ENCODE measurements at regions of chr2 and their contacts with region 1.

Region 1: GRCh38 chr2:12484536-12485115 is 232.1 kb upstream of the TRIB2 start:
- DNase-seq: peak; percentile 53
- H3K4me3 ChIP-seq: no peak overlapping the region
- H3K27ac ChIP-seq: no peak overlapping the region
- H3K4me1 ChIP-seq: peaks cover 18% of the 10 kb centered on the region
- H3K27me3 ChIP-seq: no peaks in the 10 kb centered on the region
- CTCF ChIP-seq: no peak
- POLR2A ChIP-seq: no peak

Region 2: DNA sequence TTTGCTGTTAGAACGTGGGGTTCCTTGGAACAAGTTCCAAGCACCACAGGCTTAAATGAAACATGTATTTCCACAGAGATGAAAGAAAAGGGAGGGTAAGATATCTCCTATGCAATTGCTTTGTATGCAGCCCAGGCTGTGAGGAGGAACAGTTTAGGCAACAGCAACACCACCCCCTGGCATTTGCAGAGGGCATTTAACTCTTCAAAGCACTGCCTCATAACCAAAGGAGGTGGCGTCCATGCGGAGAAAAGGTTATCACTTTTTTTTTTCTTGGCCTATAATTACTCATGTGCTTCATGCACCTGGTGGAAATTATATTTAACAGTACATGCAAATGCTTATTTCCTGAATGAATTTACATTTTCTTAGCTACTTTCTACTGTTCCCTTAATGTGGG is 452.2 kb before region 1 on chr2:
- CTCF ChIA-PET with region 1: no interaction called
- POLR2A ChIA-PET with region 1: no interaction called
- dilution Hi-C with region 1: no loop called
- intact Hi-C with region 1: no loop called
- DNase-seq: no peak
- H3K4me3 ChIP-seq: no peak overlapping the region
- H3K27ac ChIP-seq: no peak overlapping the region
- H3K4me1 ChIP-seq: no peaks in the 10 kb centered on the region
- H3K27me3 ChIP-seq: no peaks in the 10 kb centered on the region
- CTCF ChIP-seq: no peak
- POLR2A ChIP-seq: no peak

Region 3: GRCh38 chr2:12452211-12452610 is 32.4 kb before region 1 on chr2:
- CTCF ChIA-PET with region 1: no interaction called
- POLR2A ChIA-PET with region 1: no interaction called
- dilution Hi-C with region 1: no loop called
- intact Hi-C with region 1: no loop called
- DNase-seq: no peak
- H3K4me3 ChIP-seq: no peak overlapping the region
- H3K27ac ChIP-seq: no peak overlapping the region
- H3K4me1 ChIP-seq: peaks cover 3% of the 10 kb centered on the region
- H3K27me3 ChIP-seq: no peaks in the 10 kb centered on the region
- CTCF ChIP-seq: no peak
- POLR2A ChIP-seq: no peak

Region 4: GRCh38 chr2:12507295-12507694 is 22.7 kb after region 1 on chr2:
- CTCF ChIA-PET with region 1: no interaction called
- POLR2A ChIA-PET with region 1: no interaction called
- dilution Hi-C with region 1: no loop called
- intact Hi-C with region 1: no loop called
- DNase-seq: no peak
- H3K4me3 ChIP-seq: no peak overlapping the region
- H3K27ac ChIP-seq: no peak overlapping the region
- H3K4me1 ChIP-seq: no peaks in the 10 kb centered on the region
- H3K27me3 ChIP-seq: no peaks in the 10 kb centered on the region
- CTCF ChIP-seq: no peak
- POLR2A ChIP-seq: no peak

Region 5: DNA sequence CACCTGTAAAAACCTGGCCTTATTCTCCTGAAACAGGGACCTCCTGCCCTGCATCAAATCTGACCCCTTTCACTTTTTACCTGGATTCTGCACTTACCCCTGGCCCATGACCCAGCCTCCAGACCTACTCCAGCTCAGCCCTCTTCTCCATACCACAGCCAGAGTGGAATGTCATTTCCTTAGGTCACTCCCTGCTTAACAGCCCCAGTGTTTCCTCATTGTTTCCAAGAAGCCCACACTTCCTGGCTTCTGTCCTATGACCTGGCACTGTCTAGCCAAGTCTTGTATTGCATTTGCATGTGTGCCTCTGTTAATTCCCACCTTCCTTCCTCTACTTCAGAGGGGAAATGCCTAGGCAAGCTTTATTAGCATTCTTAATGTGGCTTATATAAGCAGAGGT is 180.7 kb after region 1 on chr2:
- CTCF ChIA-PET with region 1: no interaction called
- POLR2A ChIA-PET with region 1: no interaction called
- dilution Hi-C with region 1: no loop called
- intact Hi-C with region 1: loop called (anchors 5 kb)
- DNase-seq: peak; percentile 94
- H3K4me3 ChIP-seq: no peak overlapping the region
- H3K27ac ChIP-seq: peak overlapping the region; percentile 86
- H3K4me1 ChIP-seq: peaks cover 24% of the 10 kb centered on the region
- H3K27me3 ChIP-seq: no peaks in the 10 kb centered on the region
- CTCF ChIP-seq: no peak
- POLR2A ChIP-seq: no peak

Measured in endothelial cell of umbilical vein (primary cell).